Natural killer cell (primary cell): ENCODE measurements at regions of chr2 and their contacts with region 1.

Region 1: DNA sequence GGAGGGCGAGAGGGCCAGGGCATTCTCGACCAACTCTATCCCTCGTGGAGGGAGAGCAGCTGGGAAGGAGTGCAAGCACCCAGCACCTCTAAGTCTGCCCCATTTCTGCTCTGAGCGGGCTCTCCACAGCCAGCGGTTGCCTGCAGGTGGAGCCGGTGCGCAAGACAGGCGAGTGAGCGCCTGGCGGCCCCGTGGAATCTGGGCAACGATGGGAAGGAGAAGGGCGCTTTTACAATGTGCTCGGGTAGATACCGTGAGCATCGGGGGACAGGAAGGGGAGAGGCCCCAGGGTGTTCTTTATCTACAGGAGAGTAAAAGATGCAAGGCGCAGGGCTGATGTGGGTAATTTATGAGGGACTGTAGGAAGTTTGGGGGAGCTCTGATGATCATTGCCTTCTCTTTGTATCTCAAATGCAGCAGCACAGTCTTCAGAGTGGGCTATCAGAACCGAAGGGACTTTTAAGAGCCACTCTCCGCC is 867 bp upstream of the TTL start:
- DNase-seq: peak; percentile 71 to 91
- ATAC-seq: peak; percentile 76 to 82 (median 77)
- H3K4me3 ChIP-seq: peak overlapping the region; percentile 72
- H3K4me3 Mint-ChIP-seq: peak overlapping the region; percentile 99
- H3K27ac ChIP-seq: peak overlapping the region; percentile 77
- H3K27ac Mint-ChIP-seq: peak overlapping the region; percentile 83 to 87
- H3K4me1 ChIP-seq: peaks cover 22% of the 10 kb centered on the region
- H3K4me1 Mint-ChIP-seq: peaks cover 30% of the 10 kb centered on the region in 2 donors
- H3K27me3 ChIP-seq: no peaks in the 10 kb centered on the region
- H3K27me3 Mint-ChIP-seq: no peaks in the 10 kb centered on the region
- CTCF ChIP-seq: peak; percentile 74

Region 2: GRCh38 chr2:112542123-112542983 is 61.3 kb after region 1 on chr2 and contains the start of gene POLR1B:
- intact Hi-C with region 1: loop called (anchors 2 kb)
- DNase-seq: peak; percentile 75 to 84
- ATAC-seq: peak; percentile 79 to 88 (median 84)
- H3K4me3 ChIP-seq: peak within 1 kb of the TSS; percentile 81
- H3K4me3 Mint-ChIP-seq: no peak within 1 kb of the TSS
- H3K27ac ChIP-seq: peak within 1 kb of the TSS; percentile 88
- H3K27ac Mint-ChIP-seq: no peak within 1 kb of the TSS
- H3K4me1 ChIP-seq: peaks cover 17% of the 10 kb centered on the region
- H3K4me1 Mint-ChIP-seq: peaks cover 5 to 6% of the 10 kb centered on the region in 2 donors
- H3K27me3 ChIP-seq: no peaks in the 10 kb centered on the region
- H3K27me3 Mint-ChIP-seq: no peaks in the 10 kb centered on the region
- CTCF ChIP-seq: no peak
- total RNA-seq, gene POLR1B: 16.2 to 26.5 (median 22.1) TPM

Region 3: GRCh38 chr2:112726497-112727190 is 245.6 kb after region 1 on chr2:
- intact Hi-C with region 1: loop called (anchors 1 kb)
- DNase-seq: peak; percentile 85 to 93
- ATAC-seq: peak; percentile 96 to 100 (median 99)
- H3K4me3 ChIP-seq: no peak overlapping the region
- H3K4me3 Mint-ChIP-seq: no peak overlapping the region
- H3K27ac ChIP-seq: no peak overlapping the region
- H3K27ac Mint-ChIP-seq: peak overlapping the region in 1 of 2 donors; percentile 64
- H3K4me1 ChIP-seq: peaks cover 18% of the 10 kb centered on the region
- H3K4me1 Mint-ChIP-seq: peaks cover 9 to 21% of the 10 kb centered on the region in 2 donors
- H3K27me3 ChIP-seq: no peaks in the 10 kb centered on the region
- H3K27me3 Mint-ChIP-seq: no peaks in the 10 kb centered on the region
- CTCF ChIP-seq: peak; percentile 97